Activated CD4-positive, alpha-beta memory T cell treated with anti-CD3 and anti-CD28 coated beads for 36 hours (primary cell): ENCODE measurements at regions of chr5 and their contacts with region 1.

Region 1: GRCh38 chr5:76402886-76403765 is at the start of gene IQGAP2:
- DNase-seq: peak; percentile 87
- H3K4me3 Mint-ChIP-seq: peak within 1 kb of the TSS; percentile 98
- H3K27ac Mint-ChIP-seq: peak within 1 kb of the TSS; percentile 98
- H3K4me1 Mint-ChIP-seq: peaks cover 47% of the 10 kb centered on the region
- H3K27me3 Mint-ChIP-seq: no peaks in the 10 kb centered on the region
- total RNA-seq, gene IQGAP2: 92.7 to 93.0 TPM

Region 2: DNA sequence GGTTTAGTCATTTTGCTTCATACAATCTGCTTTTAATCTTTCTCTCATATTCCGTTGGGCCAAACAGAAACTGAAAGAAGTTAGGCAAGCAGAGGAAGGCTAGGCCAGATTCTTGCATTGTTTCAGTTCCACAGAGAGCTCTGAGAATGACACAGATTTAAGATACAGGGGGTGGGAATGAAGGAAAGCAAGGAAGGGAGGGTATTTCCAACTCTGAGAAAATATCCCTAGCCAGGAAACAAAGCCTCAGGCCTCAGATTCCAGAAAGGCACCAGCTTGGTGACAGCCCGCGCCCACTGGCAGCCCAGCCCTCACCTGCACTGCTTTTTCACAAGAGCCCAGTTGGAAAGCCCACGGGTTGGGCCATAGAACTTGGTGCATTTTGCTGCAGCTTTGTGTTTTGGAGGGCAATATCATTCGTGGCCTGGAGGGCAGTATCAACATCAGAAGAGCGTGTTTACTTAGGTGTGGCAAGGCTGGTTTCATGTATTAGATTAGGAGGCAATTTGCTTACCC is 1826.1 kb before region 1 on chr5:
- CTCF ChIA-PET with region 1: no interaction called
- POLR2A ChIA-PET with region 1: no interaction called
- intact Hi-C with region 1: loop called (anchors 5 kb)
- DNase-seq: peak; percentile 30
- H3K4me3 Mint-ChIP-seq: no peak overlapping the region
- H3K27ac Mint-ChIP-seq: peak overlapping the region; percentile 54
- H3K4me1 Mint-ChIP-seq: peaks cover 51% of the 10 kb centered on the region
- H3K27me3 Mint-ChIP-seq: peaks cover 5% of the 10 kb centered on the region

Region 3: DNA sequence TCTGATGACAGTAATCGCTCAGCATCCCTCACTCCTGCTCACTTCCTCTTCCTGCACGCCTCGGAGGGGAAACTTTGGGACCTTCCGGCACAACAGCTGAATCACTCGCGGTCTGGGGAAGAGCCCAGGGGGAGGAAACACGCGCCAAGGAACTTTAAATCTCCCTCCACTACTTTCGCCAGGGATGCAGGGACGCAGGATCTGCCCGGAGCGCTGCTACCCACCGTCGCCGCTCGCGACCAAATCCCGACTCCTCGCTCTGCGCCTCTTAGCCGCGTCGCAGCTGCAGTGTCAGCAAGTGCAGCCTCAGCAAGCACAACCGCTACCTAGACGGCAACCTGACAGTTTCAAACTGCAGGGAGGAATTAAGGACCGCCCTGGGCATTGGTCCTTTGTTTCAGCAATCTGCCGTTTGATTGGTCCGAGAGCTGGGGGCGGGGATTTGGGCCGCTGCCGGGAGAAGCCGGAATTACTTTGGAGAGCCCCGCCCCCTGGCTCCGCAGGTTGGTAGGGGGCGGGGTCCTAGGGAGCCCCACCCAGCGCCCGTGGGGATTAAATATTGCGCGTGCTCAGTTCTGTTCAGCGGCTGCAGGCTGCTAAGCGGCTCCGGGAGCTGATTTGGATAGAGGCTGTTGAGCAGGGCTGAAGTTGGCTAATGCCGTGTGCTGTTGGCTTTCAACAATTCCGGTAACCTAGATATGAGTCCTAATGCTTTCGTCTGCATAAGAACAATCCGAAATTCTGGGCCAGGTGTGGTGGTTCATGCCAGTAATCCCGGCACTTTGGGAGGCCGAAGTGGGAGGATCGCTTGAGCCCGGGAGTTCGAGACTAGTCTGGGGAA is 685.8 kb before region 1 on chr5 and contains the start of gene POC5:
- CTCF ChIA-PET with region 1: no interaction called
- POLR2A ChIA-PET with region 1: no interaction called
- intact Hi-C with region 1: loop called (anchors 1 kb)
- DNase-seq: peak; percentile 99
- H3K4me3 Mint-ChIP-seq: peak within 1 kb of the TSS; percentile 98
- H3K27ac Mint-ChIP-seq: peak within 1 kb of the TSS; percentile 99
- H3K4me1 Mint-ChIP-seq: peaks cover 28% of the 10 kb centered on the region
- H3K27me3 Mint-ChIP-seq: no peaks in the 10 kb centered on the region
- total RNA-seq, gene POC5: 20.7 to 21.8 TPM

Region 4: DNA sequence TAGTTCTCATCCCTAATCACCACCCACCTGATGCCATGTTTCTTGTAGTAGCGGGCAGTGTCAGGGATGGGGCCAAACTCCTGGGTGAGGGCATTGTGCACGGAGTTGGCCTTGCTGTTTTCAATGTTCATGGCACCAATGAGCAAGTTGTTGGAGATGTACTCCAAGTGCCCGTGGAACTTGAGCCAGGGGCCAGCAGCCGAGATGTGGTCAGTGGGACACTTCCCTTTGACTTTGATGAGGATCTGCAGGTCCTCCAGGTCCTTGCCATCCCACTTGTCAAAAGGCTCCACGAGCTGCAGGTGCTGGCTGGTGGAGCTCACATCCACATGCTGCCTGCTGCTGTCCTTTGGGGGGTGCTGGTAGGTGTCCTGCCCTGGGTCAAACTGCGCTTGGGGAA is 482.1 kb before region 1 on chr5:
- CTCF ChIA-PET with region 1: no interaction called
- POLR2A ChIA-PET with region 1: no interaction called
- intact Hi-C with region 1: no loop called
- DNase-seq: no peak
- H3K4me3 Mint-ChIP-seq: no peak overlapping the region
- H3K27ac Mint-ChIP-seq: no peak overlapping the region
- H3K4me1 Mint-ChIP-seq: no peaks in the 10 kb centered on the region
- H3K27me3 Mint-ChIP-seq: peaks cover 9% of the 10 kb centered on the region

Region 5: GRCh38 chr5:76331126-76331525 is 72.0 kb before region 1 on chr5:
- CTCF ChIA-PET with region 1: interaction called, 4 read pairs
- POLR2A ChIA-PET with region 1: interaction called, 4 read pairs
- intact Hi-C with region 1: loop called (anchors 2 kb)
- DNase-seq: peak; percentile 58
- H3K4me3 Mint-ChIP-seq: no peak overlapping the region
- H3K27ac Mint-ChIP-seq: peak overlapping the region; percentile 55
- H3K4me1 Mint-ChIP-seq: peaks cover 65% of the 10 kb centered on the region
- H3K27me3 Mint-ChIP-seq: no peaks in the 10 kb centered on the region

Region 6: DNA sequence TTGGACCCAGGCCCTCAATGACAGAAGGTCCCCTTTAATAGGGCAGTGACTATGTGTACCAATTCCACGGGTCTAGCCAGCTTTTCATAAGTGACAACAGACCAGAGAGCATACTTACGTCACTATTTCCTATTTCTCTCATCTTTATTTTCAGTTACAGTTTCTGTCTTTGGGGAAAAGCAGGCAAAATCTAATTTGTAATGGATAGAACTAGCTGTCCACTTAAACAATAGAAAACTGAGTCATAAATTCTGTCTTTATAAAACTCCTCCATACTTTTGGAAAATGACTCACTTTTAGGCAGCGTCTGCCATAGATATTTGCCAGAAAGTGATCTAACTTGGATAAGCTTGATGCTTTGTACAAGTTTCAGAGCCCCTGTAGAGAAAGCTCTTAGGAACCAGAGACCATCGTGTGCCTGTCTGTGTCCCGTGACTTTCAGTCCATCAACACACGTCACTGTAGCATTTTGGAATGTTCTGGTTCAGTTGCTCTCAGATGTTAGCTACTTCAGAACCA is 118.2 kb after region 1 on chr5:
- CTCF ChIA-PET with region 1: interaction called, 18 read pairs
- POLR2A ChIA-PET with region 1: interaction called, 6 read pairs
- intact Hi-C with region 1: loop called (anchors 1 kb)
- DNase-seq: no peak
- H3K4me3 Mint-ChIP-seq: peak overlapping the region; percentile 30
- H3K27ac Mint-ChIP-seq: peak overlapping the region; percentile 91
- H3K4me1 Mint-ChIP-seq: peaks cover 83% of the 10 kb centered on the region
- H3K27me3 Mint-ChIP-seq: no peaks in the 10 kb centered on the region

Region 7: GRCh38 chr5:76582230-76583162 is 179.4 kb after region 1 on chr5:
- CTCF ChIA-PET with region 1: interaction called, 38 read pairs
- POLR2A ChIA-PET with region 1: interaction called, 4 read pairs
- intact Hi-C with region 1: loop called (anchors 1 kb)
- DNase-seq: peak; percentile 59
- H3K4me3 Mint-ChIP-seq: no peak overlapping the region
- H3K27ac Mint-ChIP-seq: peak overlapping the region; percentile 66
- H3K4me1 Mint-ChIP-seq: peaks cover 27% of the 10 kb centered on the region
- H3K27me3 Mint-ChIP-seq: no peaks in the 10 kb centered on the region

Region 8: DNA sequence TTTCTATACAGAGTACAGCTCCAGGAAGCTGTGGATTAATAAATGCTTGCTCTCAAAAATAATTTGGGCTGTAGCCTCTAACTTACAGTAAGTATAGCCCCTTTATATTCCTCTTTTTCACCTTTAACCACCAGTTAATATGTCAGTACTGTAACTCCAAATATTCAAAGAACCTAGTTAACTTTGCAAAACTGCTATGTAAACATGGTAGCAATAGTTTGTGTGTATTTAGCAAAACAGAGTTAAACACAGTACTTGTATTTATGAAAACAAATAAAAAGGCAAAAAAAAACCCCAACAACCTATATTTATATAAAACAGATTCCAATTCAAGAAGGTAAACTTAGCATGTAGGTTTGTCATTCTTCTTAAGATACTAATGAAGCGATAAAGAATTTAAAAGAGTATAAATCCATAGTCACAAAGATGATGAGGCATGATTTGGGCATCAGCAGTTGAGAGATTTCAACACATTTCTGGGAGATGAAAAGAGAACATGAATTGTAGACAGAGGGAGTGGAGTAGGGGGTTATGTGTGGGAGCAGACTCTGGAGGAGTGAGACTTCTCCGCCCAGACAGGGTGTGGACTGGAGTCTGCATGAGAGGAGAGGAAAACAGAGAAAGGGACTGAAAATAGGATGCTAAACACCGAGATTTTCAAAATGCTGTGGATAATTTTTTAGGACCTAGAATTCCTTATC is 368.7 kb after region 1 on chr5:
- CTCF ChIA-PET with region 1: interaction called, 4 read pairs
- POLR2A ChIA-PET with region 1: no interaction called
- intact Hi-C with region 1: loop called (anchors 2 kb)
- DNase-seq: no peak
- H3K4me3 Mint-ChIP-seq: no peak overlapping the region
- H3K27ac Mint-ChIP-seq: no peak overlapping the region
- H3K4me1 Mint-ChIP-seq: peaks cover 4% of the 10 kb centered on the region
- H3K27me3 Mint-ChIP-seq: no peaks in the 10 kb centered on the region